Endothelial cell of umbilical vein (primary cell): ENCODE measurements at regions of chr2 and their contacts with region 1.

Region 1: GRCh38 chr2:19347619-19348562 is 10.5 kb downstream of the OSR1 start:
- DNase-seq: peak; percentile 98
- H3K4me3 ChIP-seq: peak overlapping the region; percentile 14 to 58 (median 54)
- H3K27ac ChIP-seq: peak overlapping the region; percentile 63
- H3K4me1 ChIP-seq: peaks cover 5% of the 10 kb centered on the region
- H3K27me3 ChIP-seq: peaks cover 20 to 27% of the 10 kb centered on the region in 2 experiments
- CTCF ChIP-seq: no peak
- POLR2A ChIP-seq: peak; percentile 95

Region 2: GRCh38 chr2:18749912-18750526 is 597.9 kb before region 1 on chr2:
- CTCF ChIA-PET with region 1: interaction called, 10 read pairs
- POLR2A ChIA-PET with region 1: no interaction called
- dilution Hi-C with region 1: no loop called
- intact Hi-C with region 1: no loop called
- DNase-seq: peak; percentile 42
- H3K4me3 ChIP-seq: no peak overlapping the region
- H3K27ac ChIP-seq: no peak overlapping the region
- H3K4me1 ChIP-seq: no peaks in the 10 kb centered on the region
- H3K27me3 ChIP-seq: no peaks in the 10 kb centered on the region
- CTCF ChIP-seq: peak; percentile 44 to 52
- POLR2A ChIP-seq: no peak

Region 3: DNA sequence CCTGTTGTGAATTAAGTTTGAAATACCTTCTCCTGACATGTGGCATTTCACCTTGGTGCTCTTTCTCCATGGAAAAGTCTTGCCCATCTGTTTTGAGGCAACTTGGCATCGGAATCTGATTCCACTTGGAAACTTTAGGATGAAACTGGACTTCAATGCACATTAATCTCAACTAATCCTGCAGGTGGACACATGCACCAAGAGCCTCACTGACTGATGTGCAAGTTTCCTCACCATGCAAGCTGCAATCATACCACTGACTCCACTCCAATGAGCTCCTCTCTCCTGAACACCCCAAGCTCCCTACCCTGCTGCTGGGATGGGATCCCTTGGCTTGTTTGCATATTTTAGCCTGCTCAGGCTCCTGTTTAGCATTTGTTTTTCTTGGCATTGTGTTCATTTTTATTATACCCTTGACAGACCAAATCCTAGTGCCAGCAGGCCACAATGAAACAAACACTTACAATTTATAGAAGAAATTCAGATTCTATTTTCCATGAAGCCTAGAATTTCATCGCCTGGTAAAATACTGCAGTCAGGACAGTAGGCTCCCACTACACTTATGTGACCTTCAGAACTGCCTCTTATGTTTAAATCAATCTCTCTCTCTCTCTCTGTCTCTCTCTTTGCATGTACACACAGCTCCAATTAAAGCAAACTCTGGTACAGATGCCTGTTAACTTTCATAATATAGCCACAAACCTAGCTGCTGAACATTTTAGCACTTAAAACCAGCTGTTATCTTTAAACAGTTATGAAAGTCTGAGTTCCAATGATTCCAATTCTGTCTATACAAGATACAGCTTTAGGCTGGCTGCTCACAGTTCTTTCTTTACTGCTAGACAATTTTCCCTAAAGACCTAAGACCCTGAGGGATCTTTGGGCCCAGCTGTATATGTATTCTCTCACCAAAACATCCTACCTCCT is 131.0 kb before region 1 on chr2:
- CTCF ChIA-PET with region 1: no interaction called
- POLR2A ChIA-PET with region 1: no interaction called
- dilution Hi-C with region 1: no loop called
- intact Hi-C with region 1: no loop called
- DNase-seq: no peak
- H3K4me3 ChIP-seq: no peak overlapping the region
- H3K27ac ChIP-seq: no peak overlapping the region
- H3K4me1 ChIP-seq: no peaks in the 10 kb centered on the region
- H3K27me3 ChIP-seq: no peaks in the 10 kb centered on the region
- CTCF ChIP-seq: no peak
- POLR2A ChIP-seq: no peak

Region 4: GRCh38 chr2:19362755-19363473 is 15.0 kb after region 1 on chr2:
- CTCF ChIA-PET with region 1: interaction called, 25 read pairs
- POLR2A ChIA-PET with region 1: no interaction called
- dilution Hi-C with region 1: no loop called
- intact Hi-C with region 1: loop called (anchors 1 kb)
- DNase-seq: peak; percentile 67
- H3K4me3 ChIP-seq: peak overlapping the region; percentile 22 to 88 (median 48)
- H3K27ac ChIP-seq: no peak overlapping the region
- H3K4me1 ChIP-seq: peaks cover 18% of the 10 kb centered on the region
- H3K27me3 ChIP-seq: peaks cover 72 to 75% of the 10 kb centered on the region in 2 experiments
- CTCF ChIP-seq: peak; percentile 84 to 88
- POLR2A ChIP-seq: no peak

Region 5: DNA sequence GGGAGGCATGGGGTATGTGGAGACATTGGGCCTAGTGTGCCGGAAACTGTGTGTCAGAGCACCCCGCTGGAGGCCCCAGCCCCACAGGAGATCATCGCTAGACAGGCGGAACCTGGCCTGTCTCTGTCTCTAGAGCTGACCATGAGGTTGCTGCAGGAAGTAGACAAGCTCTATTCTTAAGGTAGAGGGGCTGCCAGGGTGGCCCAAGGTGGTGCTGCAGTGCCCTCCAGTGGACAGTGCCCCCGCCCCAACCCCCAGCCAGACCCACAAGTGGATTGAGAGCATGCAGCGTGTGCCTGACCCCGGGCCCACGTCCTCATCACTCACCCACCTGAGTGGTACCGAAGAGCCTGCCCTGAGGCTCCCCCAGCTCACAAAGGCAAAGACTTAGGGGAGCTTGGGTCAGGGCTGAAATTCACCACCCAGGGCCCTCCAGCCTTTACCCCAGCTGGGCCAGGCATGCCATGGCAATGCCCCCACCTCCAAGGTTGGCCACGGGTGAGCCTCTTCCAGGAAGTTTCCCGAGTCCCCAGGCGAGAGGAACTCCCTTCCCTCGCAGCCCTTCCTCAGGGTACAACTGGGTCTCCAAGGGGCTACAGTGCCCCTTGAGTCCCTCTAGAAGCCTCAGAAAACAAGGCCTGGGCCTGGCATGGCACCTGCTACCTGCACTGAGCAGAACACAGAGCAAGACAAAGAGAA is 398.9 kb after region 1 on chr2:
- CTCF ChIA-PET with region 1: interaction called, 24 read pairs
- POLR2A ChIA-PET with region 1: no interaction called
- dilution Hi-C with region 1: no loop called
- intact Hi-C with region 1: loop called (anchors 1 kb)
- DNase-seq: peak; percentile 29
- H3K4me3 ChIP-seq: no peak overlapping the region
- H3K27ac ChIP-seq: no peak overlapping the region
- H3K4me1 ChIP-seq: no peaks in the 10 kb centered on the region
- H3K27me3 ChIP-seq: no peaks in the 10 kb centered on the region
- CTCF ChIP-seq: peak; percentile 15 to 54
- POLR2A ChIP-seq: no peak